HepG2 (cell line): ENCODE measurements at regions of chr7 and their contacts with region 1.

Region 1: GRCh38 chr7:159127691-159128642 is 16.7 kb downstream of the VIPR2 start:
- DNase-seq: no peak
- ATAC-seq: no peak; the same call in 2 of the 3 replicates
- H3K4me3 ChIP-seq: no peak overlapping the region
- H3K27ac ChIP-seq: no peak overlapping the region
- H3K4me1 ChIP-seq: peaks cover 12% of the 10 kb centered on the region
- H3K27me3 ChIP-seq: peaks cover 3 to 33% of the 10 kb centered on the region in 2 experiments; a peak in 4 of 5 replicates
- CTCF ChIP-seq: no peak
- EP300 ChIP-seq: no peak
- POLR2A ChIP-seq: no peak
- RAD21 ChIP-seq: no peak

Region 2: DNA sequence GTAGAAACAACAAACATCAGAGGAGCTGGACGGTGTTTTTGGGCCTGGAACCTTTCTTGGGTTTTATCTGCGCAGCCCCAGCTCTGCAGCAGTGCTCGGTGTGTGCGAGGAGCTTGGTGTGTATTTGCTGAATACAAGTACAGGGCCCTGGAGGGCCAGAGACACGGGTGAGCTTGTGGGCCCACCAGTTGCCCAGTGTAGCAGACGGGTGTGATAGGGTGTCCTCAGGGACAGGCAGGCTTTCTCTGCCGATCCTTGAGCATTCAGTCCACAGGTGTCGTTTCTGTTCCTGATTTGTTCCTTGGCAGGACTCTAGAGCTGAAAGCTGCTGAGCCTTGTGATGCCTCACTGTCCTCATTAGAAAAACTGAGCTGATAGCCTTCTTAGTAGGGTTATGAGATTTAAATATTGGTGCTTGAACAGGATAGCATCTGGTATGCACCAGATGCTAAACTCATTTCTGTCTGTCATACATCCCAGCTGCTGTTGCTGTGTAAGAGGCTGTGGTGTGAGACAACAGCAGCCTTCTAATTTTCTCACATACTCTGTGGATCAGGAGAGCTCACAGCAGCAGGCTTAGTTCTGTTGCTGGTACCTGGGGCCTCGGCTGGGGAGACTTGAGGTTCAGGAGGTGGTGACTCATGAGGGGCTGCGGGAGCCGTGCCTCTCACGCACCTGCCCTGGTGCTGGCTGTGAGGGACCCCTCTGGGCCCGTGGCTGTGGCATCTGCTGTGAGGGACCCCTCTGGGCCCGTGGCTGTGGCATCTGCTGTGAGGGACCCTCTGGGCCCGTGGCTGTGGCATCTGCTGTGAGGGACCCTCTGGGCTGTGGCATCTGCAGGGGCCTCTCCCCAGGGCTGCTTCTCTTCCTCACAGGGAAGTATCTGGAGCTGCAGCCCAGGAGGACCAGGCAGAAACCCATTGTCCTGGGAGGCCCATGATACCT is 259.2 kb before region 1 on chr7:
- CTCF ChIA-PET with region 1: no interaction called
- POLR2A ChIA-PET with region 1: no interaction called
- in situ Hi-C with region 1: no loop called
- intact Hi-C with region 1: no loop called
- DNase-seq: no peak
- ATAC-seq: no peak
- H3K4me3 ChIP-seq: no peak overlapping the region
- H3K27ac ChIP-seq: no peak overlapping the region
- H3K4me1 ChIP-seq: peaks cover 40% of the 10 kb centered on the region
- H3K27me3 ChIP-seq: no peaks in the 10 kb centered on the region
- CTCF ChIP-seq: no peak
- EP300 ChIP-seq: no peak
- POLR2A ChIP-seq: no peak
- RAD21 ChIP-seq: no peak

Region 3: GRCh38 chr7:159036916-159037605 is 90.9 kb before region 1 on chr7:
- CTCF ChIA-PET with region 1: no interaction called
- POLR2A ChIA-PET with region 1: no interaction called
- in situ Hi-C with region 1: no loop called
- intact Hi-C with region 1: no loop called
- DNase-seq: no peak
- ATAC-seq: peak; percentile 38
- H3K4me3 ChIP-seq: no peak overlapping the region
- H3K27ac ChIP-seq: no peak overlapping the region
- H3K4me1 ChIP-seq: no peaks in the 10 kb centered on the region
- H3K27me3 ChIP-seq: peaks cover 12 to 96% of the 10 kb centered on the region in 2 experiments
- CTCF ChIP-seq: no peak
- EP300 ChIP-seq: no peak
- POLR2A ChIP-seq: no peak
- RAD21 ChIP-seq: no peak

Region 4: GRCh38 chr7:159158888-159159405 is 31.0 kb after region 1 on chr7:
- CTCF ChIA-PET with region 1: no interaction called
- POLR2A ChIA-PET with region 1: no interaction called
- in situ Hi-C with region 1: no loop called
- intact Hi-C with region 1: loop called (anchors 2 kb)
- DNase-seq: no peak
- ATAC-seq: no peak
- H3K4me3 ChIP-seq: no peak overlapping the region
- H3K27ac ChIP-seq: no peak overlapping the region
- H3K4me1 ChIP-seq: peaks cover 27% of the 10 kb centered on the region
- H3K27me3 ChIP-seq: peaks cover 2 to 33% of the 10 kb centered on the region in 2 experiments; a peak in 4 of 5 replicates
- CTCF ChIP-seq: no peak
- EP300 ChIP-seq: no peak
- POLR2A ChIP-seq: no peak
- RAD21 ChIP-seq: no peak